Activated CD4-positive, alpha-beta T cell treated with anti-CD3 and anti-CD28 coated beads, Interleukin-2, amount 10 ng/mL, durations not matched to agents 7 days and 5 days (primary cell): ENCODE measurements at regions of chr14 and their contacts with region 1.

Region 1: GRCh38 chr14:22570132-22570949 is 18.7 kb downstream of the DAD1 start:
- DNase-seq: peak; percentile 94
- H3K4me3 Mint-ChIP-seq: peak overlapping the region; percentile 78
- H3K27ac Mint-ChIP-seq: peak overlapping the region; percentile 97
- H3K4me1 Mint-ChIP-seq: peaks cover 68% of the 10 kb centered on the region
- H3K27me3 Mint-ChIP-seq: no peaks in the 10 kb centered on the region

Region 2: GRCh38 chr14:21978184-21978998 is 592.0 kb before region 1 on chr14:
- CTCF ChIA-PET with region 1: interaction called, 12 read pairs
- POLR2A ChIA-PET with region 1: no interaction called
- DNase-seq: peak; percentile 79
- H3K4me3 Mint-ChIP-seq: peak overlapping the region; percentile 73
- H3K27ac Mint-ChIP-seq: peak overlapping the region; percentile 83
- H3K4me1 Mint-ChIP-seq: peaks cover 38% of the 10 kb centered on the region
- H3K27me3 Mint-ChIP-seq: peaks cover 3% of the 10 kb centered on the region

Region 3: GRCh38 chr14:22412926-22413411 is 157.4 kb before region 1 on chr14:
- CTCF ChIA-PET with region 1: no interaction called
- POLR2A ChIA-PET with region 1: no interaction called
- DNase-seq: no peak
- H3K4me3 Mint-ChIP-seq: no peak overlapping the region
- H3K27ac Mint-ChIP-seq: no peak overlapping the region
- H3K4me1 Mint-ChIP-seq: no peaks in the 10 kb centered on the region
- H3K27me3 Mint-ChIP-seq: no peaks in the 10 kb centered on the region

Region 4: DNA sequence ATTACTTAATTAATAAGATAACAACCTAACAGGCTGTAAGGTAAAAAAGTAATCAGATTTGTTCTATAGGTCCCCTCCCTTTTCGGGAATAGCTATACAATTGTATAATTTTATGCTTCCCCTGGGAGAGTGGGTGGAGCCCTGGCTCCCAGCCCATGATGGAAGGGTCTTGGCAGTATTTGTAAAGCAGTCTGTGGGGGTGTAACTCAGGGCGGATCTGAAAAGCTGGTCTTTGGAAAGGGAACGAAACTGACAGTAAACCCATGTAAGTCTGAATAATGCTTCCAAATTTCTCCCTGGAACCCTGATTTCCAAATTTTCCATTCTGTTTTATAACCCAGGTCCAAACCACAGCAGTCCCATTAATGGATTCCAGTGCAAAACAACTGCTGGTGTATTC is 91.7 kb before region 1 on chr14:
- CTCF ChIA-PET with region 1: no interaction called
- POLR2A ChIA-PET with region 1: no interaction called
- DNase-seq: no peak
- H3K4me3 Mint-ChIP-seq: peak overlapping the region; percentile 72
- H3K27ac Mint-ChIP-seq: no peak overlapping the region
- H3K4me1 Mint-ChIP-seq: no peaks in the 10 kb centered on the region
- H3K27me3 Mint-ChIP-seq: no peaks in the 10 kb centered on the region

Region 5: DNA sequence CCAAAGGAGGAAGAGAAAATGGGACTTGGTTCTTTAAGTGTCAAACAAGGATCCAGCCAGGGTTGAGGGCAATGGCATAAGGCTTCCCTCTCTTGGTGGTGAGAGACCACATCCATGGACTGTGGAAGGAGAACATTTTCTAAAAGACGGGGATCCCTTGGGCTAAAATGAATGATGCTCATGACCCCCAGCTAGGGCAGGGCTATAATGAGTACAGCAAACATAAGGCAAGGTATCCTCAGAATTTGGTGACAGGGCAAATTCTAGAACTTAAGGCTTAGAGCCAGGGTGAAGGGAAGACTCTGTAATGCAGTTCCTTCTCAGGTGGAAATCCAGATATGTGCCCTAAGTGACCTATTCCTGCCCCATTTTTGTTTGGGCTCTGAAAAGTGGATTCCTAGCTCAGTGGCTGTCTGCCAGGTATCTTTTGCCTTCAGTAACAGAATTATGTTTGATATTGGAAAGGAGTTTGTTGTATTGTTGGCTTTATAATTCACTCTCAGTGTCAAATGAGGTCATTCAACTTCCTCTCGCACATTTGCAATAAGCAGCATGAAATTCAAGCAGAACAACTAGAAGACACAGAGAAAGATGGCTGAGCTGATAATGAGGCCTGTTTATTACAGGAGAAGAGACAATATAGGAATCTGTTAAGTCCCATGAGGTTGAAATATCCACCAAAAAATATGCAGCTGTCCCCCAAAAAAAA is 58.1 kb before region 1 on chr14:
- CTCF ChIA-PET with region 1: interaction called, 18 read pairs
- POLR2A ChIA-PET with region 1: interaction called, 3 read pairs
- DNase-seq: no peak
- H3K4me3 Mint-ChIP-seq: peak overlapping the region; percentile 85
- H3K27ac Mint-ChIP-seq: peak overlapping the region; percentile 96
- H3K4me1 Mint-ChIP-seq: peaks cover 87% of the 10 kb centered on the region
- H3K27me3 Mint-ChIP-seq: no peaks in the 10 kb centered on the region

Region 6: DNA sequence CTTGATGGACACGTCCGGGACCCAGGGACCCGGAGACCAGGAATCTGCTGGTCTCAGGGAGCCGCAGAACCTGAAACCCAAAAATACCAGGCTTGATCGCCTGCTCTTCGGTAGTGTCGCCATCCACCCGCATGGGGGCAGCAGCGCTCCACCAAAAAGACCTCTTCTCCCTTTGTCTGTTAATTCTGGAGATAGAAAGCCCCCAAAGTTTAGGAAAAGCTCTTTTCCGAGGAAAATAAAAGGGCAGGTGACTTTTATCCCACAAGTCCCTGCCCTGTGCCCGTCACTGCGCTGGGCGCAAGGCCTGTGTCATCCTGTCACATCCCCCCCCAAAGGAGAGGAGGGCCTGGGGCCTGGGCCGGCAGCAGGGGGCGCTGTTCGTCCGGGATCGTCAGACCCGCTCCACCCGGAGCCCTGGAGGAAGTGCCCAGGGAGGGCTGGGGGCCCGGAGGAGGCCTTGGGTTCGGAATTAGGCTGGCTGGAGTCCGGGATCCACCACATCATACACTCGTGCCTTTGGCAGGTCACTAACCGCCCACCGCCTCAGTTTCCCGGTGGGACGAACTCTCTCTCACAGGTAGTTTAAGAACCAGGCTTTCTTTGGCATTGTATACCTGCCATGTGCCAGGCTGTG is 13.2 kb before region 1 on chr14:
- CTCF ChIA-PET with region 1: interaction called, 335 read pairs
- POLR2A ChIA-PET with region 1: interaction called, 8 read pairs
- DNase-seq: peak; percentile 89
- H3K4me3 Mint-ChIP-seq: peak overlapping the region; percentile 75
- H3K27ac Mint-ChIP-seq: peak overlapping the region; percentile 94
- H3K4me1 Mint-ChIP-seq: peaks cover 86% of the 10 kb centered on the region
- H3K27me3 Mint-ChIP-seq: peaks cover 2% of the 10 kb centered on the region

Region 7: GRCh38 chr14:22766456-22767322 is 196.3 kb after region 1 on chr14 and contains the start of gene OXA1L:
- CTCF ChIA-PET with region 1: interaction called, 11 read pairs
- POLR2A ChIA-PET with region 1: interaction called, 3 read pairs
- DNase-seq: peak; percentile 99
- H3K4me3 Mint-ChIP-seq: peak within 1 kb of the TSS; percentile 94
- H3K27ac Mint-ChIP-seq: peak within 1 kb of the TSS; percentile 95
- H3K4me1 Mint-ChIP-seq: peaks cover 36% of the 10 kb centered on the region
- H3K27me3 Mint-ChIP-seq: no peaks in the 10 kb centered on the region
- total RNA-seq, gene OXA1L: 122 to 141 TPM

Region 8: GRCh38 chr14:22829661-22830442 is 259.5 kb after region 1 on chr14 and contains the start of gene MRPL52:
- CTCF ChIA-PET with region 1: interaction called, 24 read pairs
- POLR2A ChIA-PET with region 1: no interaction called
- DNase-seq: peak; percentile 94
- H3K4me3 Mint-ChIP-seq: peak within 1 kb of the TSS; percentile 90
- H3K27ac Mint-ChIP-seq: peak within 1 kb of the TSS; percentile 90
- H3K4me1 Mint-ChIP-seq: peaks cover 35% of the 10 kb centered on the region
- H3K27me3 Mint-ChIP-seq: no peaks in the 10 kb centered on the region
- total RNA-seq, gene MRPL52: 101 to 112 TPM

Region 9: DNA sequence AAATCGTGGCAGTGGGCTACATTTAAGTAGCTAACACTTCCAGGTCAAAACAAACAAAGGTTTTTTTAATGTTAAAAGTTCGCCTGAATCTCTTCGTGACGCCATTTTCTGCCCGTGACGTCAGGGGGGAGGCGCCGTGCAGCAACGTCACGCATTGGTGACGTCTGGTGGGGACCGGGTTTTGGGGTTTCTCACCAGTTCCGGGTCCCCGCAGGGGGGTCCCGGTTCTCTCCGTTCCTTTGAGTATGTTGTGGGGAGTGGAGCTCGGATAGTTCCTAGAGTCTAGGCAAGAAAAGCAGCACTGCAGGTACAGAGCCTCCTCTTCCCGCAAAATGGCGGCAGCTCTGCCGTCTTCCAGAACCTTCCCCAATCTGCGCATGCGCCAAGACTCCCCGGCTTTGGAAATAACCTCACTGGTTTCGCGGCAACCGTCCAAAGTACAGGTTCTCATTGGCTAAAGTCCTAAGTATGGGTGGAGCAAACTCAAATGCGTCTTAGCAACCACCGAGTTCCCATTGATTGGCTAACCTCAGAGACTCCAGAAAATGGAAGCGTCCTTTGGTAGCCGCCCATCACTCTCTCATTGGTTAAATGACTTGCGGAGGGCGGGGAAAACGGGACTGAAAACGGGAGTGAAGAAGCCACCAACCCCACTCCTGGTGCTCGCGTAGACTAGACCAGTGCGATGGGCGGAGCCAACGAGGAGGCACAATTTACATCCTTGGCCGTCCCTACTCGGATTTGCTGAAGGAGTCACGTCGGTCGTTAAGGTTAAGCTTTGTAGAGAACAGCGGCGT is 348.7 kb after region 1 on chr14 and contains the start of gene RBM23:
- CTCF ChIA-PET with region 1: interaction called, 15 read pairs
- POLR2A ChIA-PET with region 1: no interaction called
- DNase-seq: peak; percentile 100
- H3K4me3 Mint-ChIP-seq: peak within 1 kb of the TSS; percentile 91
- H3K27ac Mint-ChIP-seq: peak within 1 kb of the TSS; percentile 100
- H3K4me1 Mint-ChIP-seq: peaks cover 45% of the 10 kb centered on the region
- H3K27me3 Mint-ChIP-seq: no peaks in the 10 kb centered on the region
- total RNA-seq, gene RBM23: 79.0 to 79.6 TPM